Aorta (tissue), 5 donors: ENCODE measurements at regions of chr1 and their contacts with region 1.

Region 1: GRCh38 chr1:10507111-10507879 is 32.5 kb downstream of the PEX14 start:
- DNase-seq: peak; percentile 76 to 81
- ATAC-seq: peak; percentile 85
- H3K4me3 ChIP-seq: no peak overlapping the region
- H3K27ac ChIP-seq: no peak overlapping the region
- H3K4me1 ChIP-seq: peaks cover 0 to 7% of the 10 kb centered on the region in 2 donors
- H3K27me3 ChIP-seq: no peaks in the 10 kb centered on the region

Region 2: DNA sequence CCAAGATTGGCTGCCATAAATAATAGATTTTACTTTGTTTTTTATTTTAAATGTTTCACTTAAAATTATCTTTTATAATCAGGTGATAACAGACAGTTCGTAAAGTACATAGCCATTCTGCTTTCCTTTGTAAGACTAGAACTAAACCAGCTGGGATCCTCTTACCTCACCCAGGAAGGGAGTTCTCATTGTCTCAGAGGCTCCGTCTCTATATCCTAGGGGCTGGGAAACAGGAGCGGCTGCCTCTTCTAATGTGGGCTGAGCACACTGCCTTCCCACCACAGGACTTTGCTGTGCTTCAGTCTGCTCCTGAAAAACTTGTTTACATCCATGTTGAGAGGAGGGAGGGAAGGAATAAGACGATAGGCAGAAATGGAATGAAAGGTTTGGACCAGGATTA is 154.0 kb before region 1 on chr1:
- intact Hi-C with region 1: no loop called
- DNase-seq: no peak
- ATAC-seq: no peak
- H3K4me3 ChIP-seq: no peak overlapping the region
- H3K27ac ChIP-seq: no peak overlapping the region
- H3K4me1 ChIP-seq: no peaks in the 10 kb centered on the region
- H3K27me3 ChIP-seq: no peaks in the 10 kb centered on the region

Region 3: GRCh38 chr1:10438677-10439163 is 68.6 kb before region 1 on chr1:
- intact Hi-C with region 1: no loop called
- DNase-seq: no peak
- ATAC-seq: no peak
- H3K4me3 ChIP-seq: no peak overlapping the region
- H3K27ac ChIP-seq: no peak overlapping the region
- H3K4me1 ChIP-seq: no peaks in the 10 kb centered on the region
- H3K27me3 ChIP-seq: no peaks in the 10 kb centered on the region

Region 4: GRCh38 chr1:10796019-10796944 is 289.0 kb after region 1 on chr1 and contains the start of gene CASZ1:
- intact Hi-C with region 1: loop called (anchors 5 kb)
- DNase-seq: peak; percentile 78 to 91
- ATAC-seq: peak; percentile 91
- H3K4me3 ChIP-seq: peak within 1 kb of the TSS; percentile 55 to 84
- H3K27ac ChIP-seq: no peak within 1 kb of the TSS
- H3K4me1 ChIP-seq: no peaks in the 10 kb centered on the region
- H3K27me3 ChIP-seq: no peaks in the 10 kb centered on the region
- total RNA-seq, gene CASZ1: 20.6 to 39.0 TPM

Region 5: GRCh38 chr1:10806966-10807365 is 299.7 kb after region 1 on chr1:
- intact Hi-C with region 1: no loop called
- DNase-seq: no peak
- ATAC-seq: no peak
- H3K4me3 ChIP-seq: no peak overlapping the region
- H3K27ac ChIP-seq: no peak overlapping the region
- H3K4me1 ChIP-seq: no peaks in the 10 kb centered on the region
- H3K27me3 ChIP-seq: no peaks in the 10 kb centered on the region

Region 6: GRCh38 chr1:10867138-10867721 is 359.9 kb after region 1 on chr1:
- intact Hi-C with region 1: loop called (anchors 2 to 5 kb)
- DNase-seq: peak; percentile 60 to 91
- ATAC-seq: peak; percentile 76
- H3K4me3 ChIP-seq: peak overlapping the region; percentile 15 to 31
- H3K27ac ChIP-seq: no peak overlapping the region
- H3K4me1 ChIP-seq: no peaks in the 10 kb centered on the region
- H3K27me3 ChIP-seq: no peaks in the 10 kb centered on the region

Region 7: DNA sequence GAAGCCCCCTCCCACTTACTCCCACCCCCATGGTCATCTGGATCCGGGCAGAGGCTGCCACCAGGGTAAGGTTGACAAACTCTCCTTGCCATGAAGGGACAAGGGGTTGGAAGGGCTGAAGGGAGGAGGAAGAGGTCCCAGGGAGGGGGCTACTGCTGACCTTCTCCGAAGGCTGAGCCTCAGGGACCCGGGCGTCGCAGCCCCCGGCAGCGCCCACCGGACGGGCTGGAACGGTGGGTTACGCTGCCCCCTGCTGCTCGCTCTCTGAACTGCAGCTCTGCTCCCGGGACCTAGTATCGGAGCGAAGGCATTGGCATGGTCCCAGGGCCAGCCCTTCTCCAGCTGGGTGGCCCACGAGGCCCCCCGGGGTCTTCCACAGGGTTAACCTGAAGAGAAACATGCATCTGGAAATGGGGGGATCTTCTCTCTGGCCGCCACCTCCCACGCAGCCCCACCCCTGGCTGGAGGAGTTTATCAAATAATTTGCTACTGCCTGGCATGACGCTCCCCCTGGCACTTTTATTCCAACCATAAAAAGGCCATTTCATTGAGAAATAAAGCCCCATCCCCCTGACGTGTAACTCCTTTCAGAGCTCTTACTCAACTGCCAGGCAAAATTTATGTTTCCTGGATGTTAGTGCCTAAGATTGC is 434.7 kb after region 1 on chr1:
- intact Hi-C with region 1: loop called in 1 of 2 experiments (anchors 10 kb)
- DNase-seq: peak; percentile 62 to 89
- ATAC-seq: no peak
- H3K4me3 ChIP-seq: no peak overlapping the region
- H3K27ac ChIP-seq: no peak overlapping the region
- H3K4me1 ChIP-seq: no peaks in the 10 kb centered on the region
- H3K27me3 ChIP-seq: no peaks in the 10 kb centered on the region